Esophagus muscularis mucosa (tissue), 4 donors: ENCODE measurements at regions of chr18 and their contacts with region 1.

Region 1: GRCh38 chr18:21904856-21905255 is 164.3 kb downstream of the MIB1 start:
- DNase-seq: peak; percentile 78
- H3K4me3 ChIP-seq: no peak overlapping the region
- H3K27ac ChIP-seq: no peak overlapping the region
- H3K4me1 ChIP-seq: peaks cover 0 to 30% (median 24%) of the 10 kb centered on the region in 4 donors
- H3K27me3 ChIP-seq: no peaks in the 10 kb centered on the region
- CTCF ChIP-seq: no peak
- EP300 ChIP-seq: no peak
- POLR2A ChIP-seq: no peak

Region 2: DNA sequence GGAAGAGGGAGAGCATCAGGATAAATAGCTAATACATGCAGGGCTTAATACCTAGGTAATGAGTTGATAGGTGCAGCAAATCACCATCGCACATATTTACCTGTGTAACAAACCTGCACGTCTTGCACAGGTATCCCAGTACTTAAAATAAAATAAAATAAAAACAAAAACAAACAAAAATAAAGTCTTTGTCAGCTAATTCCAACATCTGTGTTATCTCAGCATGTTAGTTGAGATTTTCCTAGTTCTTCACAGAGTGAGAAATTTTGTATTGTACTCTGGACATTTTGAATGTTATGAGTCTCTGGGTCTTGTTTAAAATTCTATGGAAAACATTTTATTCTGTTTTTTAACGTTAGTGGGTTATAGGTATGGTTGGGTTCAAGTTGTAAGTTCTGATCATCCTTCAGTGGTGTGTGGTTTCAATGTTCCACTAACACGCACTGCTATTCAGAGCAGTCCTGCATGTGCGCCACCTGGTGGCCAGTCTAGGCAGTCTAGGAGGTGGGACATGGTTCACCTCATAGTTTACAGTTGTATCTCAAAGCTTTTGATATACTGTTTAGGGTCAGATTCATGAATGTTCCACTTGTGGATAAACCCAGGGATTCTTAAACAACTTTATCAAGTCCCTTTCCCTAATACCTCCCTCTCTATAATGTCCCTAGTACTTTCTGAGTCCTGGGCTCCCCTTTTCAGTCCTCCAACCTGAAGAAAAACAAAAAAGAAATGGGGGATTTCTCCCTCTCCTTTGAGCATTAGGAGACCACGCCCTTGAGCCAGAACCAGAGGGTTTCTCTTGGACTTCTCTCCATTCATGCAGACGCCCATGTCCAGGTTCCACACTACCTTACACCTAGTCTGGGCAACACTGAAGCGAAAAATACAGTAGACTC is 51.1 kb after region 1 on chr18:
- intact Hi-C with region 1: loop called (anchors 5 kb)
- DNase-seq: no peak
- H3K4me3 ChIP-seq: no peak overlapping the region
- H3K27ac ChIP-seq: no peak overlapping the region
- H3K4me1 ChIP-seq: no peaks in the 10 kb centered on the region
- H3K27me3 ChIP-seq: no peaks in the 10 kb centered on the region
- CTCF ChIP-seq: peak; percentile 72 to 89 (median 87)
- EP300 ChIP-seq: no peak
- POLR2A ChIP-seq: no peak